ENCODE measurements at regions of chr15 and their contacts with region 1.

Region 1: GRCh38 chr15:57146506-57147201 is 228.2 kb downstream of the TCF12 start:
- DNase-seq: peak; percentile 18
- CTCF ChIP-seq: peak; percentile 61

Region 2: GRCh38 chr15:57118013-57118799 is 28.4 kb before region 1 on chr15:
- CTCF ChIA-PET with region 1: interaction called, 12 read pairs
- POLR2A ChIA-PET with region 1: no interaction called
- DNase-seq: no peak
- CTCF ChIP-seq: no peak

Region 3: DNA sequence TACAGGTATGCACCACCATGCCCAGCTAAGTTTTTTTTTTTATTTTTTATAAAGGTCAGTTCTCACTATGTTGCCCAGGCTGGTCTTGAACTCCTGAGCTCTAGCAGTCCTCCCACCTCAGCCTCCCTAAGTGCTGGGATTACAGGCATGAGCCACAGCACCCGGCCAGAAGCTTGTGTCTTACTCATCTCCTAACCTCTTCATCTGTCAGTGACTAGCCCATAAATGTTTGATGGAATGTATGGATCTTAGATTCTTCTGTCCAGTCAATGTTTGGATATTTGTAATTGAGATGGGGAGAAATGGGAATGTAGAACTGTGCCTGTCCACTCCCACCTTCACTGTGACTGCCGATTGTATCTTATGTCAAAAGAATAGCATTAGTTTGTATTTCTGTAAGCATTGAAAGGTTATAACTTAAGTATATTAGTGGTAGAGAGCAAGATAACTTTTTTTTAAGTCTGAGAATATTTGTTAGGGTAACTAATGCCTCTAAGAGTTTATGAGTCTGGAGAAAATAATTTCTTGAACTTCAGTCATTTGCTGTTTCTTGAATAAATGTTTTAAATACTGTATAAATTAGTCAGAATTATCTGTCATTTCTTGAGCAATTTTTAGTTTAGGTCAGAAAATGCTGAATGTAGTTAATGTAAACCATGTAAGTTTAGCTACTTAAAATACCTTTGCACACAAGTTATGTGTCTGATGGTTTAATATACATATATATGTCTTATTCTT is 14.3 kb after region 1 on chr15:
- CTCF ChIA-PET with region 1: interaction called, 24 read pairs
- POLR2A ChIA-PET with region 1: no interaction called
- DNase-seq: no peak
- CTCF ChIP-seq: no peak

Region 4: DNA sequence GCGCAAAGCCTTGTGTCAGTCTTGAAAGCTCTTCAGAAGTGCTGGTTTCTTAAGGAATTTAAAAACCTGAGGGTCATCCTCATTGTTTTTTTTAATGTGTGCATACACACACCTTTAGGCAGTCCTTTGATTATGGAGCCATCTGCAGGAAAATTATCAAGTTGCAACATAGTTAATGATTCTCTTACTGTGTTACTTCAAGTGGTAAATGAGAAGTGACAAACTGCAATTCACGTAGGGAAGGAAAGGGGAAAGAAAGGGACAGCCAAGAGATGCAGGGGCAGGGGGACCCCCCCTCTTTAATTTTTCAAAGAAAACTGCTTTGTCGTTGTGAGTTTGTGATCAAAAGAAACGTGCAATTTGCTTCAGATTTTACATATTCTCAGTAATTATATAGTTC is 67.2 kb after region 1 on chr15:
- CTCF ChIA-PET with region 1: interaction called, 27 read pairs
- POLR2A ChIA-PET with region 1: no interaction called
- DNase-seq: peak; percentile 14
- CTCF ChIP-seq: peak; percentile 52

Region 5: DNA sequence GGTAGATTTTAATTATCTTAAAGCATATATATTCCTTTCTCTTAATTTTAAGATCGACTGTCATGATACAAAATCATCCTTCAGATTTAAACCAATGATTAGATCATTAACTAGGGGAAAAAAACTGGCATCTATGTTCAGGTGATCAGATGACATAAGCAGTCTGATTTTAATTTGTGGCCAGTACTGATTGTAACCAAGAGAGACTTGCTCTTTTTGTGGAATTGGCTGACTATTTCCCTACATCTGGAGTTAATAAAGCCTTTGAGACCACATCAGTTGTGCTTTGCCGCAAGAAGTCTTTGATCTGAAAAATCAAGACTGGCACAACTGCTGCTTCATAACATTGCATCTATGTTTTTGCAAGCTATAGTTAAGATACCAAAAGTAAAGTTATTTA is 81.2 kb after region 1 on chr15:
- CTCF ChIA-PET with region 1: no interaction called
- POLR2A ChIA-PET with region 1: no interaction called
- DNase-seq: no peak
- CTCF ChIP-seq: no peak

Region 6: DNA sequence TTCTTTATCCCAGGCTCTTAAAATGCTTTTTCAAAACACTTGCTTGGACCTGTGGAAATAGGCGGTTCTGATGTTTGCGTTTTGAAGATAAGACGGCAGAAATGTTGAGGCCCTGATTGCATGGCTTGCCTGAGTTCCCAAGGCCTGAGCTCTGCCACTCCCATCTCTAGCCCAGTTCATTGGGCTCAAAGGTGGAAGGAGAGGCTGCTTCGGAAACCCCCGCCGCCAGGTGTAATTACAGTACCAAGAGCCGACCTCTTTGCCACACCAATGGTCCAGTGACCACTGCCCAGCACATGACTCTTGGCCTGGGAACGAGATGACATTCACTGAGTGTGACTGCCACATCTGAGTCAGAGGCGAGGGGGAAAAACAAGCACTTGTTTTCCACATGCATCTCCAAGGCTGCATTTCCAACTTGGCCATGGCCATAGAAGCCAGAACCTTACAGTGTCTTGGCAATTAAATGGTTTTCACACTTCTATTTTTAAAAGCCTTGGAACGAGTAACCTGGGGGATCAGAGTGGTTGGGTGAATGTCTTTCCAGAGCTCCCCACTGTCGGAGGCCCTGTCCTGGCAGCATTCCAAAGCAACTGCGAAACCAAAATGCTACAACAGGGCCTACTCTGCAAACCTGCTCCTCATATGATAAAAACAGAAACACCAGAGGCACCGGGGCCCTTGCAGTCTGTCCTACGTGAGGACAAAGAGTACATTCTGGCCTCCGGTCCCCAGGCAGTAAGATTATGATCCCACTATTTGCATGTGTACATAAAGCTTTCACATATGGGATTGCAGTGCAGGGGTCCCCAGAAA is 165.9 kb after region 1 on chr15:
- CTCF ChIA-PET with region 1: interaction called, 163 read pairs
- POLR2A ChIA-PET with region 1: no interaction called
- DNase-seq: no peak
- CTCF ChIP-seq: no peak

Region 7: DNA sequence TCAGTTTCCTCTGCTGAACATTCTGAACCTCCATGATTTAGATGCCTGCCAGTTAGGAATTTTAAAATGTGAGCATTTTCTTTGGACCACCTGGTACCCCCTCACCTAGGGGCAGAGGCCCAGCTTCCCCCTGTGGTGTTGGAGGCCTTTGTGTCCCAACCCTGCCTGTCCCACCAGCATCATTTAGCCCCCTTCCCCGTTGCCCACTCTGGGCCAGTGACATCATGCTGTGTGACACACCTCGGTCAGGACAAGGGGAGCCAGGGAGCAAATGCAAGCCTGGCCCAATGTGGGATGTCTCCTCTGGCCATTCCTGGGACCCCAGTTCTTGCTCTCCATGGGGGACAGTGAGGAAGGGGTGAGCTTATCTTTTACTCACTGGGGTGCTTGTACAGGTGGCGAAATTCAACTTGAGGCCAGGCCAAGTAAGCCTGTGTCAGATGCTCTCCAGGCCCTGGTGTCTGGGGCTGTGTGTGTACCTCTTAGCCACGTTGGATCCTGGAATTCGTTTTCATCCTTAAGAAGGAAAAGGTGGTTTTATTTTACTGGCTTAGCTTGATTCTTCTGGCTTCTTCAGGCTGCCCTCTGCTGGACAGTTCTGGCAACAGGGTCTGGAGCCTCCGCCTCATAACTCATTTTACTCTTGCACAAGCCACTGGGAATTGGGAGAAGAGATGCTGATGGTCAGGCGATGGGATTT is 395.3 kb after region 1 on chr15:
- CTCF ChIA-PET with region 1: interaction called, 12 read pairs
- POLR2A ChIA-PET with region 1: no interaction called
- DNase-seq: peak; percentile 53
- CTCF ChIP-seq: peak; percentile 76

Measured in GM10248 (cell line).